Activated T-helper 2 cell treated with anti-CD3 and anti-CD28 coated beads, Interferon-gamma antibody, Interleukin-2, Interleukin-4, amounts not matched to agents 10 μg/mL and 5 μg/mL and 100 μg/mL, durations not matched to agents 14 hours and 24 hours and 36 hours (primary cell): ENCODE measurements at regions of chr12 and their contacts with region 1.

Region 1: DNA sequence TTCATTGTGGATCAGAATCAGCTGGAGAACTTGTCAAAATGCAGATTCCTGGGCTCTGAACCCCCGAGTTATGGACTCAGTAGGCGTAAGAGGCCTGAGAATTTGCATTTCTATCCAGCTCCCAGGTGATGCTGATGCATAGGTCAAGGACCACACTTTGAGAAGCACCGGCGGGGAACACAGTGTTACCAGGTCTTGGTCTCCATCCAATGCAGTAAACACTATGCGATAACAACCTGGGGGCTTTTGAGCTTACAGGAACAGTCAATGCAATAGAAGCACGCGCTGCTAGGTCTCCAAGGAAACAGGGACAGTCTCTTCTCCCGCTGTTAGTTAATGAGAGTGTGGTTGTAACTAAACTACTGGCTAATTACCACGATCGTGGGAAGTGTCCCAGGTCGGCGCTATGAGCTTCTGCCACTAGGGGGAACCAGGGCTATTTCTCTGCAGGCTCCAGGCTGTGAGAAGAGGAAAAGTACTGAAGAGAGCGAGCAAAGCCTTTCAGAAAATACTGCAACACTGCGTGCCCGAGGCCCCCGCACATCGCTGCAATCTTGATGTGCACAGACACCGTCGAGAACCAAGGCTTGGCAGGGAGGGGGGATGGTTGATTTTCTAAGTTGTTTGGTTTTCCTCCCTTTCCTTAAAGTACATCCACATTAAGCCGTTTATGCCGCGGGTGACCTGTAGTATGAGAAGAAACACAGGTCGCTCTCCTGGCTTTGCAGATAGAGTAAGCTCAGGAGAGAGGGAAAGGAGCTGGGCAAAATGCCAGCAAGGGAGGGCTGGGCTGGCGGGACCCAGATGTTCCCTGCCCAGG is 52.0 kb upstream of the KCNA1 start:
- DNase-seq: peak; percentile 67
- H3K4me3 Mint-ChIP-seq: peak overlapping the region; percentile 51
- H3K27ac Mint-ChIP-seq: no peak overlapping the region
- H3K4me1 Mint-ChIP-seq: peaks cover 23% of the 10 kb centered on the region
- H3K27me3 Mint-ChIP-seq: peaks cover 19% of the 10 kb centered on the region

Region 2: DNA sequence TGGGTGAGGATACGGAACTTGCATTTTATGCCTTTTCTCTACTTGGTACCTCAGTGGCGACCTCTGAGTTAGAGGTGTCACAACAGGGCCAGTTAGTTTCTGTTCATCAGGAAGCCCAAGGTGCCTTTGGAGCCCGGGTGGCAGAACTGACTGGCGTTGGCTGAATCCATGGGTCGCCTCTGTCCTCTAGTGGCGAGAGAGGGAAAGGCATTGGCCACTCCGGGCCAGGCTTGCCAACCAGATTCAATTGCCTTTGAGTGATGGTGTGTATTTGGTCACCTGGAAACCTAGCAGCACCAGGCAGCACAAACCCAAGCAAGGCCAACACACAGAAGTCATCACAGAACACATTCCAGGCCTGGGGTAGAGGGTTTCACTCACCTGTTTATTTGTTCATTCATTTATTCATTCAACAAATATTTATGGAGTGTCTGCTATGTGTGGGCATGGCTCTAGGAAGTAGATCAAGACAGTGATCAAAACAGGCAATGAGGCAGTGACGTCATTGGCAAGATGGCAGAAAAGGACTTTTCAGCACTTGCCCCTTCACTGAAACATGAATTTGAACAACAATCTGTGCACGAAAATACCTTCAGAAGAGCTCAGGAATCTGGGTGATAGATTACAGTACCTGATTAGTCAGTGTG is 145.5 kb after region 1 on chr12:
- intact Hi-C with region 1: loop called (anchors 1 kb)
- DNase-seq: peak; percentile 44
- H3K4me3 Mint-ChIP-seq: no peak overlapping the region
- H3K27ac Mint-ChIP-seq: no peak overlapping the region
- H3K4me1 Mint-ChIP-seq: no peaks in the 10 kb centered on the region
- H3K27me3 Mint-ChIP-seq: peaks cover 8% of the 10 kb centered on the region

Region 3: GRCh38 chr12:5083955-5084849 is 226.5 kb after region 1 on chr12:
- intact Hi-C with region 1: loop called (anchors 5 kb)
- DNase-seq: no peak
- H3K4me3 Mint-ChIP-seq: no peak overlapping the region
- H3K27ac Mint-ChIP-seq: no peak overlapping the region
- H3K4me1 Mint-ChIP-seq: no peaks in the 10 kb centered on the region
- H3K27me3 Mint-ChIP-seq: peaks cover 5% of the 10 kb centered on the region